BJ (cell line): ENCODE measurements at regions of chr12 and their contacts with region 1.

Region 1: DNA sequence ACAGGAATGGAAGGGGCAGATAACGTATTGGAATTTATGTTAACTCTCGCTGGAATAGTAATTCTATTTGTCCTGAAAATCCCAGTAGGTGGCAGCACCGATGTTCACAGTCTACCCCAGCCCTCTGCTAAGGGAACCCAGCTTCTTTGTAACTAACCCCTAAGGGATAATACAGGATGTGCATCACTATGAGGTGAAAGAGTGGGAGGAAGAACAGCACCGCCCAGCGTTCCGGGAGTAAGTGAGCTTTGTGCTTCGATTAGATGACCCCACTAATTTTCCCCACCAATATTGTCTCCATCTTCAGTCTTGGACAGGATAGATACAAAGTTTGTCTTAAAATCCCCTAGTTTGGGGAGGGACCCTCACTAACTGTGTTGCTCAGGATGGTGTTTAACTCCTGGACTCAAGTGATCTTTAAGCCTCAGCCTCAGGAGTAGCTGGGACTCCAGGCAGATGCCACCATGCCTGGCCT is 2.7 kb downstream of the SLC2A3 start:
- DNase-seq: peak; percentile 73
- H3K4me3 ChIP-seq: peak overlapping the region; percentile 75
- H3K27me3 ChIP-seq: no peaks in the 10 kb centered on the region
- CTCF ChIP-seq: peak; percentile 69

Region 2: DNA sequence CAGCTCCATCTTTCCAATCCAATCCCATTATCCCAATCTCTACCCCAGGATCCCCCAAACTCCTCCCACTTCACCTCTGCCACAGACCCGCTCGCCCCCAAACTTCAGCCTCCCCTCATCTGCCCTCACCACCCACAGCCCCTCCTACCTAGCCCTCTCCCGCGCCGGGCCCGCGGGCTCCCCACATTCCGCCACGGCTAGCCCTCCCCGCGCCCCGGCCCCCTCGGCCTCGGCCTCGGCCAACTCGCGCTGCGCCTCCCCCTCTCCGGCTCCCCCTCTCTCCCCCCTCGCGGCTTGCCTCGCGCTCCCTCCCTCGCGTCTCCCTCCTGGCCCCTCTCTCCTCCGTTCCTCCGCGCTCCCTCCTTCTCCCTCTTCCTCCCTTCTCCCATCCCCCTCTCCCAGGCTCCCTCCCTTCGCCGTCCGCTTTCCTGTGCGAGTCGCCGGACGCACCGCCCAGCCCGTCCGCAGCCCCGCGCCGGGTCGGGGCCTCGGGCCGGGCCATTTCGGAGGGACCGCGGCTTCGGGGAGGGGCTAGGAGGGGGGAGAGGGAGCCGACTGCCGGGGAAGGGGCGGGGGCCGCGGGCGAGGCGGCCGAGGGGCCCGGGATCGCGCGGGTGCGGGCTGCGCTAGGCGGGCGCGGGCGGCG is 1005.8 kb before region 1 on chr12 and contains the start of gene ATN1:
- CTCF ChIA-PET with region 1: no interaction called
- POLR2A ChIA-PET with region 1: interaction called, 10 read pairs
- DNase-seq: no peak
- H3K4me3 ChIP-seq: peak within 1 kb of the TSS; percentile 55
- H3K27me3 ChIP-seq: no peaks in the 10 kb centered on the region
- CTCF ChIP-seq: no peak
- polyA plus RNA-seq, gene ATN1: 13.0 and 15.9 TPM in 2 replicates

Region 3: GRCh38 chr12:7844116-7844515 is 89.2 kb before region 1 on chr12:
- CTCF ChIA-PET with region 1: no interaction called
- POLR2A ChIA-PET with region 1: no interaction called
- DNase-seq: no peak
- H3K4me3 ChIP-seq: no peak overlapping the region
- H3K27me3 ChIP-seq: no peaks in the 10 kb centered on the region
- CTCF ChIP-seq: no peak

Region 4: DNA sequence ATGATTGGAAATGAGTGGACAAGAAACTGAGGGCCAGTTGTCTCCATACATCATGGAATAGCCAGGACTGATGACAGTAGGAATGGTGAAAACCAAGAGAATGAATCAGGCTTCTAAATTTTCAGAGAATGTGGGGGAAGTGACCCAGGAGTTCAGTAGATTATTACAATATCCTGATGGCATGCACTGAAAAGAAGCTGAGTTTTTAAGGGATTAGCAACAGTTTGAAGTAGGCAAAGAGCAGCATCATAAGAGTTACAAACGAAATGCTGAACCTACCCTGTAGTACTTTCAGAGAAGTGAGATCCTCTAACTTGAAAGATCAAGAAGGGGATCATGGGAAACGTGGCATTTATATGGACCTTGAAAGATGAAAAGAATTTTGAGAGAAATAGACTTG is 73.7 kb before region 1 on chr12:
- CTCF ChIA-PET with region 1: interaction called, 10 read pairs
- POLR2A ChIA-PET with region 1: interaction called, 5 read pairs
- DNase-seq: peak; percentile 29
- H3K4me3 ChIP-seq: no peak overlapping the region
- H3K27me3 ChIP-seq: no peaks in the 10 kb centered on the region
- CTCF ChIP-seq: no peak

Region 5: DNA sequence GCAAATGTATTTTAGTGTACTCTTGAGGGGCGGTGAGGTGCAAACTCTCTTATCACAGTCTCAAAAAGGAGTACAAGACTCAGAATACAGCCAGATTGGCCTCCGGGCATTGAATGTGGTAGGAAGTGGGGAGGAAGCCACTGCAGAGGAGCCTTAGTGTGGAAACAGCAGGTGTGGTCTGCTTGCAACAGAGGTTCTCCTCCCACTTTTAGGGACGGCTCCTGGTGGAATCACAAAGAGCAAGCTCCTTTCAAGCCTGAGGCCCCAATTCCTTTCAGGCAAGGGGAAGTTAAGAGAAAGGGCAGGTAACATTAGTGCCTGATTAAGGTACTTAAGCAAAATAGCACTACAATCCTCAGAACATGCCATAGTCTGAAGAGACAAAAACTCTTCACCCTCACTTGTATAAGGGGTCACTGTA is 26.4 kb after region 1 on chr12:
- CTCF ChIA-PET with region 1: interaction called, 30 read pairs
- POLR2A ChIA-PET with region 1: interaction called, 105 read pairs
- DNase-seq: no peak
- H3K4me3 ChIP-seq: no peak overlapping the region
- H3K27me3 ChIP-seq: no peaks in the 10 kb centered on the region
- CTCF ChIP-seq: no peak

Region 6: GRCh38 chr12:7995266-7995963 is 62.1 kb after region 1 on chr12:
- CTCF ChIA-PET with region 1: interaction called, 59 read pairs
- POLR2A ChIA-PET with region 1: interaction called, 8 read pairs
- DNase-seq: peak; percentile 61
- H3K4me3 ChIP-seq: peak overlapping the region; percentile 17
- H3K27me3 ChIP-seq: no peaks in the 10 kb centered on the region
- CTCF ChIP-seq: peak; percentile 79